ENCODE measurements at regions of chr22 and their contacts with region 1.

Region 1: DNA sequence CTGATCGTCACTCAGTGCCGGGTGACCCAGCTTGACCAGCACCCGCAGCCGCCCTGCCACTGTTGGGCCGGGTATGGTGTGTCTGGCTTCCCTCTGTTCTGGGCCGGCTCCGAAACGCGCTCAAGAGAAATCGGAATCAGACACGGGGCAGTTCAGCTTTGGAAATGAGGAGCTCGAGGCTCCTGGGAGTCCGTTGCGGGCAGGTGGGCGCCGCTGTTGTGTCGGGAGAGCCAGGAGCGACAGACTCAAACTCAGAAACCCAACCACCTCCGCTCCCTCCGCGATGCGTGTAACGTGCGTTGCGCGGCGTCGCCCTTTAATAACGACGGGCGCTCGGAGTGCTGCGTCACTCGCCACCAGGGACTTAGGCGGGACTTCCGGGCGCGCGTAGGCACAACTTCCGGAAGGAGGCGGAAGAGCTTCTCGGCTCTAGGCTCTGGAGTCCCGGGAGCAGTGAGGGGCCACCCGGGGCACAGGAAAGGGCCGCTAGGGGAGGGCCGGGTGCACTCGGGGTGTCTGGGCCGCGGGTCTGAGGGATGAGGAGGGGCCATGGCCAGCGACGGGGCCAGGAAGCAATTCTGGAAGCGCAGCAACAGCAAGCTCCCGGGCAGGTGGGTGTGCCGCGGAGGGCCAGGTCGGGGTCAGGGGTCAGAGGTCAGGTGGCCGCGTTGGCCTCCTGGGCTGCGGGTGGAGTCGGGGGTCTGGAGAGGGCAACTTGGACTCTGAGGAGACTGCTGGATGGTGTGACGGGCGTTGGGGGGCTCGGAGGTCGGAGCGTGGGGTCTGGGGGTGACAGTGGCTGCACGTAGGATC is at the start of gene TBC1D22A:
- DNase-seq: peak; percentile 96
- ATAC-seq: peak; percentile 95
- H3K4me3 Mint-ChIP-seq: peak within 1 kb of the TSS; percentile 96
- H3K27ac Mint-ChIP-seq: peak within 1 kb of the TSS; percentile 99
- H3K4me1 Mint-ChIP-seq: peaks cover 52% of the 10 kb centered on the region
- H3K27me3 Mint-ChIP-seq: no peaks in the 10 kb centered on the region
- total RNA-seq, gene TBC1D22A: 32.6 to 44.9 TPM

Region 2: DNA sequence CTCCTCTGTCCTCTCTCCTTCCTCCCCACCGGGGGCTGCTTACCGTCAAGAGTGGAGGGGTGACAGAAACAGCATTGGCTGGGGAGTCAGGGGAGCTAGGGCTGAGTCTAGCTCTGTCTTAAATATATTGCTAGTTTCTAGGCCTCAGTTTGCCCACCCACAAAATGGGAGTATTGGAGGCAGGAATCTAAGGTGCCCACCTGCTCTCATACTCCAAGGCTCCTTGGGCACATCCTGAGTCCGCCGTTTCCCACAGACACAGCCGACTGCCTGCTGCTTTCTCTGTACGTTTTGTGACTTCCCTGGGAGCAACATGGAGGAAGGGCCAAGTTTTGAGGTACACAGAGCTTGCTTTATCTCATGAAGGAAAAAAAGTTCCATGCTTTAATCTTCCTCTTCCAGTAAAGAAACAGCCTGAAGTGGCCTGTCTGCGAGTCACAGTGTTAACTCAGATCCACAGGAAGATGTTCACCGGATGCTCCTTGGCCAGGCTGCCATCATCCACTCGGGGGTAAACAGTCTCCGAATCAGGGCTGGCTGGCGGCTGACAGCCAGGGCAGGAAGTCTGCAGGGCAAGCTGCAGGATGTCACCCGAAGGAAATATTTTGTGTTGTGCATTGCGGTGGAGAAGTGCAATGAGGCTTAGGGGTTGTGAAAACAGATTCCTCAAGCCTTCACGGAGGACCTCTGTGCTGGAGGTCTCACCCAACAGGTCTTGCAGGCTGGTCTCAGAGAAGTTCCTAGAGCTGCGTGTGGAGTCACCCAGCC is 13.4 kb before region 1 on chr22:
- CTCF ChIA-PET with region 1: interaction called, 52 read pairs
- DNase-seq: peak; percentile 81
- ATAC-seq: peak; percentile 89
- H3K4me3 Mint-ChIP-seq: peak overlapping the region; percentile 54
- H3K27ac Mint-ChIP-seq: peak overlapping the region; percentile 93
- H3K4me1 Mint-ChIP-seq: peaks cover 21% of the 10 kb centered on the region
- H3K27me3 Mint-ChIP-seq: no peaks in the 10 kb centered on the region

Region 3: DNA sequence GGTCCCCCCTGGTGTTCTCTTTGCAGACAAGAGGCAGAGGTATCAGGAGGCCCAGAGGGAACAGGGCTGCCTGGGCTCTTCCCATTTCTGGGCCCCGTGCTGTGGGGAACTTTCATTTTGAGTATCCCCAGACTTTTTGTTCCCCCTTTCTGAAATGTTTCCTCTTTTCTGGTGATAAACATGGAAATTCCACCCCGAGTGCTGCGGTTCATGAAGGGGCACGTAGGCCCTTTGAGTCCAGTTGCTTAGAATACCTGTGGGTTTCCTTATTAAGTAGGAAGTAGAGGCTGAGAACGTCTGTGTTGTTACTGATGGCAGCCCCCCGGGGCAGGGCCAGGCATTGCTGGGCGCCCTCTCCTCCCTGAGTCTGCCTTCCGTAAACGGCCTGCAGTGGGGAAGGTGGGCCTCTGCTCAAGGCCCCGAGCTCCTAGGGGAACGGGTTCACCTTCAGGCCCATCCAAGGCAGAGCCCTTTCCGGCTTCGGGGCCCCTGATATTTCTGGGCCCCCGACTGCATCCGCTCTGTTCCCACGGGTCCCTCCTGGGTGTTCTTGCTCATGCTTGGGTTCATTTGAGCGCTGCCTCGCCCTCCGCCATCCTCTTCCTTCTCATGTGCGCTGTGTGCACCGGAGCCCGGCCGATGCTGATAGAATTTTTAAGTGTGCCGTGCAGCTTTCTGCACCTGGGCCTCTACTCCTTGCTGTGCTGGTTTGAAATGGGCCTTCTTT is 12.0 kb after region 1 on chr22:
- CTCF ChIA-PET with region 1: interaction called, 14 read pairs
- DNase-seq: peak; percentile 50
- ATAC-seq: peak; percentile 59
- H3K4me3 Mint-ChIP-seq: peak overlapping the region; percentile 68
- H3K27ac Mint-ChIP-seq: peak overlapping the region; percentile 88
- H3K4me1 Mint-ChIP-seq: peaks cover 59% of the 10 kb centered on the region
- H3K27me3 Mint-ChIP-seq: no peaks in the 10 kb centered on the region

Region 4: GRCh38 chr22:46791201-46791731 is 28.8 kb after region 1 on chr22:
- CTCF ChIA-PET with region 1: interaction called, 20 read pairs
- DNase-seq: peak; percentile 91
- ATAC-seq: peak; percentile 93
- H3K4me3 Mint-ChIP-seq: peak overlapping the region; percentile 78
- H3K27ac Mint-ChIP-seq: peak overlapping the region; percentile 100
- H3K4me1 Mint-ChIP-seq: peaks cover 52% of the 10 kb centered on the region
- H3K27me3 Mint-ChIP-seq: no peaks in the 10 kb centered on the region

Region 5: GRCh38 chr22:46798366-46799350 is 36.2 kb after region 1 on chr22:
- CTCF ChIA-PET with region 1: interaction called, 63 read pairs
- DNase-seq: peak; percentile 80
- ATAC-seq: peak; percentile 88
- H3K4me3 Mint-ChIP-seq: no peak overlapping the region
- H3K27ac Mint-ChIP-seq: peak overlapping the region; percentile 54
- H3K4me1 Mint-ChIP-seq: peaks cover 7% of the 10 kb centered on the region
- H3K27me3 Mint-ChIP-seq: no peaks in the 10 kb centered on the region

Region 6: DNA sequence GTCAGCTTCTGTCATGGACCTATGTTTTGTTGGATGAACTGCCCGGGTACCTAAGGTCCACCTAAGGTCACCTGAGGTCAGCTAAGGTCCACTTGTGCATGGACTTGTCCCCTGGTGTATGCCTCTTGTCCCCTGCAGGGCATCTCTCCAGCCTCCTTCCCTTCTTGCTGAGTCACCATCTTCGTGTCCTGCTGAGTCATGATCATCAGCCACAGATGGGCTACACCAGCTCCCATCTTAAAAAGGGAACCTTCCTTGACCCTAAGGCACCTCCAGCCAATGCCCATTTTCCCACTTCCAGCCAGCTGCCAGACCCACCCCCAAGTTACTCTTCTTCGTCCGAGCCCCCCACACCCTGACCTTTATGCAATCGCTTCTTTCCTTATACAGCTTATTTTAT is 544.9 kb after region 1 on chr22:
- CTCF ChIA-PET with region 1: no interaction called
- DNase-seq: peak; percentile 38
- ATAC-seq: no peak
- H3K4me3 Mint-ChIP-seq: no peak overlapping the region
- H3K27ac Mint-ChIP-seq: no peak overlapping the region
- H3K4me1 Mint-ChIP-seq: no peaks in the 10 kb centered on the region
- H3K27me3 Mint-ChIP-seq: peaks cover 2% of the 10 kb centered on the region

Measured in activated CD8-positive, alpha-beta memory T cell treated with anti-CD3 and anti-CD28 coated beads, Interleukin-2, amount 10 ng/mL, durations not matched to agents 7 days and 5 days (primary cell).